ENCODE measurements at regions of chr9 and their contacts with region 1.

Region 1: DNA sequence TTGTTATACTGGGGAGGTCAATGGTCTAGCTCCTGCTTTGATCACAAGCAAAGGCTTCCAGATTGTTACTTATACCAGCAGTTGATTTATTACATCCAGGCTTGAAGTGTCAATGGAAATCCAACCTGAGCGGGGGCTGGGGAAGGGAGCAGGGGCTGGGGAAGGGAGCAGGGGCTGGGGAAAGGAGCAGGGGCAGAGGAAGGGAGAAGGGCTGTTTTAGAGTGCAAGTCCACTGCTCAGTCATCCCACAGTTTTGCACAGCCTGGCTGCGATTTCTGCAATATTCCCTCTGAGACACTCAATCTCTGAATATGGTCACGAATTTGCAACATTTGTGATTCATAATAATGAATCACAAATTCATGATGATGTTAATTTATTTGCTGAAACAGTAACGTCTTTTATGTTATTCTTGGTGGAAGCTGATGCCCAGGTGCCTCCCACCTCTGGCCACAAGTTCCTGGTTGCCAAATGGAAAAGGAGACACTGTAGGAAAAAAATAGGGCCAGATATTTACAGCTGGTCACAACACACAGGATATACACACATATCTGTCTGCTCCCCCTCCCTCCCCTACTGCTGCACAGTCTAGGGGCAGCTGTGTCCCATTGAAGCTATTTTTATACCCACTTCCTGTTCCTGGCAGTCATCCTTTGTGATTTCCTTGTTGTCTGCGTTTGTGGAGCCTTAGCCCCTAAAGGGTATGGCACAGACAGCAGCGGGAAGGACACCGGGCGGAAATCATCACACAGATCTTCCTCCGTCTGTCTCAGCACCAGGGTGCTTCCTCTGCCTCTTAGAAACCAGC is 325.1 kb downstream of the GADD45G start:
- DNase-seq: no peak
- ATAC-seq: peak; percentile 21 to 63
- H3K4me3 ChIP-seq: no peak overlapping the region
- H3K27ac ChIP-seq: no peak overlapping the region
- H3K4me1 ChIP-seq: peaks cover 16 to 25% of the 10 kb centered on the region in 2 donors
- H3K27me3 ChIP-seq: no peaks in the 10 kb centered on the region
- CTCF ChIP-seq: no peak
- POLR2A ChIP-seq: no peak

Region 2: GRCh38 chr9:89710697-89711096 is 219.2 kb before region 1 on chr9:
- in situ Hi-C with region 1: no loop called
- intact Hi-C with region 1: no loop called
- DNase-seq: no peak
- ATAC-seq: peak; percentile 47 to 64
- H3K4me3 ChIP-seq: no peak overlapping the region
- H3K27ac ChIP-seq: no peak overlapping the region
- H3K4me1 ChIP-seq: no peaks in the 10 kb centered on the region
- H3K27me3 ChIP-seq: no peaks in the 10 kb centered on the region
- CTCF ChIP-seq: no peak
- POLR2A ChIP-seq: no peak

Region 3: DNA sequence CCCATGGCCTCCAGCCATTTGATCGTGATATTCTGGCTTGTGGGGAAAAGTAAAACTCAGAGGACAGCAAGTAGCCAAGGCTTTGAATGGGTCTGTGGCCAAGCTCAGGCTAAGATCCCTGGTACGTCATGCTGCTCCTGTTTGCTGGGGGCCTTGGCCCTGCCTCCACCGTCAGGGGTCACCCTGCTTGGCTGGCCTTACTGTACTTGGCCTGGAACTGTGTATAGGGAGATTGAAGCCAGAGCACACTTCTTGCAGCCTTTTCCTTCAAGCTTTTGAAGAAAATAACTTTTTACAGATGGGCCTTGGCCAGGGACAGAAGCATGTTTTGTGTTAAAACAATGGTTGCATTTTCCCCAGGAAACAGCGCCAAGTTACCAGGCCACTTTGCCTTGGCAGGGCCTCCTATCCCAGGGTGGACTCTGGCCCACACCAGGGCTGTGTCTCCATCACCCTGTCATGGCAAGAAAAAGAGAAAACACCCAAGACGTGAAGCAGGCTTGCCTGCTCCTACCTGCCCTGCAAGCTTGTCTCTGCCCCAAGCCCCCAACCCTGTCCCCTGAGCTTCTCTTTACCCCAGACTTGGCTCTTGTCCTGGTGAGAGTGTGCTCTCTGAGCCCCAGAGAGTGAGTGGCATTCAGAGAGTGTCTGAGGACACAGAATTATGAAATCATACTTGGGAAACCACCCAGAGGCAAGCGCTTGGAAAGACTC is 38.1 kb before region 1 on chr9:
- in situ Hi-C with region 1: no loop called
- intact Hi-C with region 1: loop called (anchors 5 kb)
- DNase-seq: peak in 1 of 2 donors; percentile 54
- ATAC-seq: peak; percentile 91 to 96
- H3K4me3 ChIP-seq: no peak overlapping the region
- H3K27ac ChIP-seq: peak overlapping the region in 3 of 4 donors; percentile 29 to 60 (median 59)
- H3K4me1 ChIP-seq: peaks cover 18 to 22% of the 10 kb centered on the region in 2 donors
- H3K27me3 ChIP-seq: no peaks in the 10 kb centered on the region
- CTCF ChIP-seq: no peak
- POLR2A ChIP-seq: no peak